ENCODE measurements at regions of chr5 and their contacts with region 1.

Region 1: GRCh38 chr5:142769741-142770631 is at the start of gene ARHGAP26:
- DNase-seq: peak; percentile 93
- H3K4me3 Mint-ChIP-seq: peak within 1 kb of the TSS; percentile 91
- H3K27ac Mint-ChIP-seq: peak within 1 kb of the TSS; percentile 89
- H3K4me1 Mint-ChIP-seq: peaks cover 43% of the 10 kb centered on the region
- H3K27me3 Mint-ChIP-seq: peaks cover 7% of the 10 kb centered on the region
- total RNA-seq, gene ARHGAP26: 20.0 and 21.2 TPM in 2 replicates

Region 2: GRCh38 chr5:142087920-142088679 is 681.9 kb before region 1 on chr5:
- intact Hi-C with region 1: no loop called
- DNase-seq: no peak
- H3K4me3 Mint-ChIP-seq: peak overlapping the region; percentile 51
- H3K27ac Mint-ChIP-seq: peak overlapping the region; percentile 85
- H3K4me1 Mint-ChIP-seq: peaks cover 52% of the 10 kb centered on the region
- H3K27me3 Mint-ChIP-seq: no peaks in the 10 kb centered on the region

Region 3: DNA sequence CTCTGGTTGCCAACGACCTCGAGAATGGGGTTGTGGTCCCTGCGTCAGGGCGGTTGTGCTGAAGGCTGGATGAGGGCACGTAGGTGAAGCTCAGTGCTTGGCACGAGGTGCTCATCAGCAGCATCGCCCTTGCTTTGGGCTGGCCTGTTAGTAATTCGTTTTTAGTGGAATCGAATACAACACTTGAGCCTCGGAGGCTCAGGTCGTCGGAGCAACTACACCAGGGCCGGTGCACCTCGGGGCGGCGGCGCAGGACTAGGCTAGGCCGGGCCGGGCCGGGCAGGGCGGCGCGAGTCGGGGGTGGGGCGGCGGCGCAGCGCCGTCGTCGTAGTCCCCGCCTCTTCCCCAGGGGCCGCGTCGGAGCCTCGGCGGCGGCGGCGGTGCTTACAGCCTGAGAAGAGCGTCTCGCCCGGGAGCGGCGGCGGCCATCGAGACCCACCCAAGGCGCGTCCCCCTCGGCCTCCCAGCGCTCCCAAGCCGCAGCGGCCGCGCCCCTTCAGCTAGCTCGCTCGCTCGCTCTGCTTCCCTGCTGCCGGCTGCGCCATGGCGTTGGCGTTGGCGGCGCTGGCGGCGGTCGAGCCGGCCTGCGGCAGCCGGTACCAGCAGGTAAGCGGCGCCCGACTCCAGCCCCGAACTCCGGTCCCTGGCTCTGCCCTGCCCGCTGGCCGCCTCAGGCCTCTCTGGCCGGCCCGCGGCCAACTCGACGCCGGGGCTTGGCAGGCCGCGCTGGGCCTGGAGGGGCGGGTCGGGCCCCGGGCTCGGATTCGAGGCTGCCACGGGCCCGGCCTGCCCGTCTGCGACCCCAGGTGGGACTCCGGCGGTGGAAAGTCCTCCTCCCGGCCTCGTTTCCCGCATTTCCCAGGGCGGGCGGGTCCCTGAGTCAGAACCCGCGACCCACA is 661.3 kb before region 1 on chr5 and contains the start of gene NDFIP1:
- intact Hi-C with region 1: loop called (anchors 5 kb)
- DNase-seq: peak; percentile 85
- H3K4me3 Mint-ChIP-seq: peak within 1 kb of the TSS; percentile 97
- H3K27ac Mint-ChIP-seq: peak within 1 kb of the TSS; percentile 100
- H3K4me1 Mint-ChIP-seq: peaks cover 80% of the 10 kb centered on the region
- H3K27me3 Mint-ChIP-seq: no peaks in the 10 kb centered on the region
- total RNA-seq, gene NDFIP1: 119 and 129 TPM in 2 replicates

Region 4: DNA sequence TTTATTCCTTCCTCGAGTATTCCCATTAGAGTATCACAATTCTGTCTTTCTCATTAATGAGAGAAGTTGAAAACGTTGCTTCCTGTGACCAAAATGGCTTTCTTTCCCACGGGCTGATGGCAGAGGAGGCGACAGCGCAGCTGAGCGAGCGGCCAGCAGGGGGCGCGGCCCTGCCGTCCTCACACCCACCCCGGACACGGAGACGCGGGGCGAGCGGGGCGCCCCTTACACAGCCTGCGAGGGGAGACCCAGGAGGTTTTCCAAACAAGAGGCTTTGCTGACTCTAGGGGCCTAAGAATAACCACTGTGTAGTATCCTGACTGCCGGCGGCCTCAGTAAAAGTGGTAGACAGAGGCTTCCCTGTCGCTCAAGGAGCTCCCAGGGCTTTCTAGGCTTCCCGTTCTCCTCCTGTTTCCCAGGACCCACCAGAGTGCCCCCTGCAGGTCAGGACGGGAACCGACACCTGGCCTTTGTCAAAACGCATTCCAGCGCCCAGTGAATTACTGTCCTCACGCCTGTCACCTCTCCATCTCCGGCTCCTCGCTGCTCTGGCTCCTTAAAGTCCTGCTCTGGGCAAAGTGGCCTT is 56.8 kb before region 1 on chr5:
- intact Hi-C with region 1: loop called (anchors 2 kb)
- DNase-seq: peak; percentile 75
- H3K4me3 Mint-ChIP-seq: peak overlapping the region; percentile 71
- H3K27ac Mint-ChIP-seq: no peak overlapping the region
- H3K4me1 Mint-ChIP-seq: peaks cover 13% of the 10 kb centered on the region
- H3K27me3 Mint-ChIP-seq: peaks cover 11% of the 10 kb centered on the region

Region 5: DNA sequence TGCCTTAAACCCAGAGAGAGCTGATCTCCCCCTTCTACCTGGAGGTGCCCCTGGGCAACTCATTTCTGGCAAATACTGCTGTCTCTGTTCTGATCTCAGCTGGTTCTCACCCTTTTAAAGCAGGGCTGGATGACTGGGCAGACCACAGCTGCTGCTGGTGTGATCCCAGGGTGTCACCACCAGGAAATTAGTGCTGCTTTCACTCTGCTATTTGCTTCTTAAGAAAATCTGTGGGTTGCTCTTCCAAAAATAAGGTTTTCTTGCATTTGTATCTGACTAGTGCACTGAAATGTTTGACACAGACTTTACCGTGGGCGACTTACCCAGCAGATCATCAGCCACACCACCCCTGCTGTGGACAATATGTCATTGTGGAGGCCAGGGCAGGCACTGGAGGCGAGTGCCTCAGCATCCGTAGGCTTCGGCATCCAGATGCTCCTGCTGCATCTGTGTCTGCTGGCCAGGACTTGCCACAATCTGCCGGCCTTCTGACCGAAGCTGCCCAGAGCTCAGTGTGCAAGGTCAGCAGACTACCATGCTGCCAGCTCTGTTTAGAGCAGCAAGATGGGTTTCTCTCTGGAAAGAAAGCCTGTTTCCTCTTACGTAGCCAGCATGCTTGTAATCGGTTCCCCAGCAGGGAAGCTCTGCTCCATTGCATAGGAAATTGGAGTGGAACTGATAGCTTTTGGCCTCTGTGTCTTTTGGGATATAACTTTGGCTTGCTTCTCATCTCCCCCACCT is 13.8 kb after region 1 on chr5:
- intact Hi-C with region 1: loop called (anchors 1 kb)
- DNase-seq: peak; percentile 57
- H3K4me3 Mint-ChIP-seq: peak overlapping the region; percentile 32
- H3K27ac Mint-ChIP-seq: peak overlapping the region; percentile 62
- H3K4me1 Mint-ChIP-seq: peaks cover 63% of the 10 kb centered on the region
- H3K27me3 Mint-ChIP-seq: no peaks in the 10 kb centered on the region

Region 6: DNA sequence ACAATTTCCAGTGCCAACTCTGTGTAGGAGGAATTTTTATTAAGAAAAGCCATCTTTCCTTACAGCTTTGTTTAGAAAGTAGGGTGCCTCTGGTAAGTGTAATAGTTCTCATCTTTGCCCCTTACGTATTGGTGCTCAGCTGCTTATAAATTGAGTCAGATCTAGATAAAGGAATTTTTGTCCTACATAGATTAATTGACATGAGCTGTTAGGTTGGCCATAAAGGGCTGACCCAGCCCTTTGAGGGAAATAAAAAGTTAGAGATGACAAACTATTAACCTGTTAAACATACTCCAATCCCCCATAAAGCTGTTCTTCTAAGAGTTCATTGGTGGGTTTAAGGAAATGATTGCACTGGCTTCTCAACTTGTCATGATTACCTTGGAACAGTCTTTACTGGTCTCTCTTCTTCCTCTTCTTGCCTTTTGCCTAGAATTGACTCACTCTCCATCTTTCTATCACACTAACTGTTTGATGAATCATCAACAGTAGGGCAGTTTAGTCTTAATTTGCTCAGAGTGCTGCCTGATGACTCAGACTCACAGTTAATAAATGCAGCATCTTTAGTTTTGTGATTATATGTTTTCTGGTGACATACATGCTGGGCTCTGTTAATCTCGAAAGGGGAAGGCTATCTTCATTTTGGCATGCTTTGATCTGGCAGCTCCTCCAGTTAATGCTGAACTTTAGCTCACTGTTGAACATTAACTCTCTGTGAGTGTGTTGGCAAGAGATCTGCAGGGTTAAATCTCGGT is 51.9 kb after region 1 on chr5:
- intact Hi-C with region 1: loop called (anchors 1 kb)
- DNase-seq: no peak
- H3K4me3 Mint-ChIP-seq: no peak overlapping the region
- H3K27ac Mint-ChIP-seq: peak overlapping the region; percentile 16
- H3K4me1 Mint-ChIP-seq: peaks cover 79% of the 10 kb centered on the region
- H3K27me3 Mint-ChIP-seq: no peaks in the 10 kb centered on the region

Region 7: GRCh38 chr5:142872795-142873194 is 102.8 kb after region 1 on chr5:
- intact Hi-C with region 1: loop called (anchors 1 kb)
- DNase-seq: no peak
- H3K4me3 Mint-ChIP-seq: no peak overlapping the region
- H3K27ac Mint-ChIP-seq: no peak overlapping the region
- H3K4me1 Mint-ChIP-seq: peaks cover 13% of the 10 kb centered on the region
- H3K27me3 Mint-ChIP-seq: peaks cover 3% of the 10 kb centered on the region

Region 8: GRCh38 chr5:143403593-143404415 is 633.8 kb after region 1 on chr5 and contains the start of gene NR3C1:
- intact Hi-C with region 1: loop called (anchors 1 kb)
- DNase-seq: peak; percentile 82
- H3K4me3 Mint-ChIP-seq: peak within 1 kb of the TSS; percentile 95
- H3K27ac Mint-ChIP-seq: peak within 1 kb of the TSS; percentile 99
- H3K4me1 Mint-ChIP-seq: peaks cover 48% of the 10 kb centered on the region
- H3K27me3 Mint-ChIP-seq: no peaks in the 10 kb centered on the region
- total RNA-seq, gene NR3C1: 62.7 TPM in 2 replicates